Activated CD8-positive, alpha-beta memory T cell treated with anti-CD3 and anti-CD28 coated beads, Interleukin-2, amount 10 ng/mL, durations not matched to agents 7 days and 5 days (primary cell): ENCODE measurements at regions of chr18 and their contacts with region 1.

Region 1: DNA sequence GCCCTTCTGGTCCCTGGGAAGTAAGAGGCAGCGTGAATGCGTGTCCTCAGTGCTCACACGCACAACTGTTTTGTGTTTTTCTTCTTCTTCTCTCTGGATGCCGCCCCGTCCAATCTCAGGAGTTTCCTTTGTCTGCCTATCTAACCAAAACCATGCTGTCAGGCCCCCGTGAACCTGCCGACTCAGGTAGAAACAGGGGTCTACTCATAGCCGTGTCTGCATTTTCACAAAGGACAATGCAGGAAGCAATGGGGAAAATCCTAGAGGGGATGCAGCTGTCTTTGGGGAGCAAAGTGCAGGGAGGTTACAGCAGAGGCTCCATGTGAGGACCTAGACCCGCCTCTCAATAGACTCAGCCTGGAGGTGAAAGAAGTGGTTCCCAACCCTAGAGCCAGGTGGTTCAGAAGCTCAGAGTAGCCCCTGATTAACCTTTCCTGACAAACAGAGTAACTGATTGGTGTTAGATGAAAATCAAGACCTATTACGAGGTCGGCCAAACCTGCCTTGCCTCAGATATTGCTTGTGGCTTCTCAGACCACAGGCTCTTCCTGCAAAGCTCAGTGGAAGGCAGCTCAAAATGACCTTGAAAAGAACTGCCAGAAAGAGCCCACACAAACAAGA is 49.3 kb downstream of the CD226 start:
- DNase-seq: peak; percentile 79
- ATAC-seq: peak; percentile 35
- H3K4me3 Mint-ChIP-seq: peak overlapping the region; percentile 76
- H3K27ac Mint-ChIP-seq: peak overlapping the region; percentile 98
- H3K4me1 Mint-ChIP-seq: peaks cover 75% of the 10 kb centered on the region
- H3K27me3 Mint-ChIP-seq: no peaks in the 10 kb centered on the region

Region 2: DNA sequence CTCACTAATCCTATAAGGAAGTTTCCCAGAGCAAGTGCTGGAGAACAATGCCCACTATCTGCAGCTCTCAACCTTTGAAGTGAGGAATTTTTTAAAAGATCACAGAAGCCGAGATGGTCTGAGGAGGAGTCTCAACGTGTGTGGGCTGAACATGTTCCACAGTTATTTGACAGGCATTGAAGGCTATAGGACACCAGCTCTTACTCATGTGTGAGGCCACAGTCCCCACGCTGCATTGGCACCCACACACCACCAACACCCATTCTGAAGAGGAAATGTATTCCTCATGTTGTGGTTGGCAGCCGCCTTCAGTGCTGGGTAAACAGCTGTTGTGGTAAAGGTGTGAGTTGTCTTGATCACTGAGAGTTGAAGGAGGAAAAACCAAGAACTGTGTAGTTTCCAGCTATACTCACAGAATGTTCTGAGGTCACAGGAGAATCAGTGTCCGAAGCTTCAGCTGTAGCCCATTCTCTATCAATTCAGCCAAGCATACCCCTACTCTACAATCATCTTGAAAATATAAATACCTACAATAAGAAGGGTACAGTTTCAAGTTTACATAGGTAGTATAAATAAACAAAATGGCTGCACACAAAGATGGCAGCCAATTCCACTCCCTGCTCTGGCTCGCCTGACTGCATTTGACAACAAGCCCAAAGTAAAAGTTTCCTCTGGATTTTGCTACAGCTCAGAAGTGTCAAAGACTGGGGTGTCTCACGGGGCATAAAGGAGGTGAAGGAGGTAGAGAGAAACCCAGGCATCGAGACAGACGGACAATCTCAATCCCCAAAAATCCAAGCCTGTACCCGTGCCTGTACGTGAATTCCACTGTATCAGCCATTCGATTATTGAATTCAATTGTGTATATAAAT is 37.2 kb after region 1 on chr18:
- CTCF ChIA-PET with region 1: interaction called, 20 read pairs
- DNase-seq: peak; percentile 96
- ATAC-seq: peak; percentile 94
- H3K4me3 Mint-ChIP-seq: no peak overlapping the region
- H3K27ac Mint-ChIP-seq: no peak overlapping the region
- H3K4me1 Mint-ChIP-seq: peaks cover 39% of the 10 kb centered on the region
- H3K27me3 Mint-ChIP-seq: peaks cover 2% of the 10 kb centered on the region

Region 3: DNA sequence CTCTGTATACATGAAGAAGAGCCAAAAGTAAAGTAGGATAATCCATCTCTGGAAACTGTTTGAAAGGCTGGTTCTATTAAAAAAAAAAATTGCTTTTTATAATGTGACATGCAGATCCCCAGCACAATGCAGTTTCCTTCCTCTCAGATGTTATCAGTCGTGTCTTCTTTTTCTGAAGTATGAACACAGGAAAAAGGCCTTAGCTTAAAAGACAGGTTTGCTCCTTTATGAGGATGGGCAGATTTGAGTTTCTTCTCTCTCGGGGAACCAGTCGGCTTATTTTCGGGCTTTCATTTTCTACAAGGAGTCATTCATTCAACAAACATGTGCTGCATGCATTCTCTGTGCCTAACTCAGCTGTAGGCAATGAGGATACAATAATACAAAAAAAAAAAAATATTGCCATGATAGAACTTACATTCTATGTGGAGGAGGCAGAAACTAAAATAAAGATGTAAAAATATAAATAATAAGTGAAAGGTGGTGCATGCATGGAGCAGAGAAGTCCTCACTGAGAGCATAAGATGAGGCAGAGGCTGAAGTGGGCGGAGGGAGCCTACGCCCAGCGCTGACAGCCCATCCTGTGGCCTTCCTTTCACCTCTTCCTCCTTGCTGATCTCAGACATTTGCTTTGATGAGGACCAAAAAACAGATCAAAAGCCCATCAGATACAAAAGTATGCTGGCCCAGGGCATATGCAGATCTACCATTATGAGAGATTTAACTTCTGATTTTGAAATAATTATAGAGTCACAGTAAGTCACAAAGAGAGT is 49.2 kb after region 1 on chr18 and contains the start of gene CD226:
- CTCF ChIA-PET with region 1: interaction called, 22 read pairs
- DNase-seq: peak; percentile 74
- ATAC-seq: peak; percentile 54
- H3K4me3 Mint-ChIP-seq: no peak within 1 kb of the TSS
- H3K27ac Mint-ChIP-seq: no peak within 1 kb of the TSS
- H3K4me1 Mint-ChIP-seq: peaks cover 37% of the 10 kb centered on the region
- H3K27me3 Mint-ChIP-seq: no peaks in the 10 kb centered on the region
- total RNA-seq, gene CD226: 83.3 to 95.4 TPM

Region 4: GRCh38 chr18:70205421-70206397 is 307.4 kb after region 1 on chr18 and contains the start of gene RTTN:
- CTCF ChIA-PET with region 1: no interaction called
- DNase-seq: peak; percentile 95
- ATAC-seq: peak; percentile 95
- H3K4me3 Mint-ChIP-seq: peak within 1 kb of the TSS; percentile 100
- H3K27ac Mint-ChIP-seq: peak within 1 kb of the TSS; percentile 99
- H3K4me1 Mint-ChIP-seq: peaks cover 41% of the 10 kb centered on the region
- H3K27me3 Mint-ChIP-seq: peaks cover 8% of the 10 kb centered on the region
- total RNA-seq, gene RTTN: 30.3 to 42.3 TPM

Region 5: DNA sequence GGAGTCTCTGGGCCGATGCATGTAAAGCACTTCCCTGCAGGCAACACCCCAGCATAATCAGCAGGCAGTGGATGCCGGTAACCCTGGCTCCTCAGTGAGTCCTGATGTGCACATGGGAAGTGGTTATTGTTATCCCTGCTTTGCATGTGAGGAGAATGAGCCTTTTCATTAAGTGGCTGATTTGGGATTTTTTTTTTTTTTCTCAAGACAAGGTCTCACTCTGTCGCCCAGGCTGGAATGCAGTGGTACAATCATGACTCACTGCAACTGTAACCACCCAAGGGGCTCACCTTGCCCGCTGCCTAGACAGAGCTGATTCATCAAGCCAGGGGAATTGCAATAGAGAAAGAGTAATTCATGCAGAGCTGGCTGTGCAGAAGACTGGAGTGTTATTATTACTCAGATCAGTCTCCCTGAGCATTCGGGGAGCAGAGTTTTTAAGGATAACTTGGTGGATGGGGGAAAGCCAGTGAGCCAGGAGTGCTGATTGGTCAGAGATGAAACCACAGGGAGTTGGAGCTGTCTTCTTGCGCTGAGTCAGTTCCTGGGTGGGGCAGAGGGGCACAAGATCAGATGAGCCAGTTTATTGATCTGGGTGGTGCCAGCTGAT is 485.9 kb after region 1 on chr18:
- CTCF ChIA-PET with region 1: no interaction called
- DNase-seq: no peak
- ATAC-seq: no peak
- H3K4me3 Mint-ChIP-seq: no peak overlapping the region
- H3K27ac Mint-ChIP-seq: no peak overlapping the region
- H3K4me1 Mint-ChIP-seq: peaks cover 5% of the 10 kb centered on the region
- H3K27me3 Mint-ChIP-seq: no peaks in the 10 kb centered on the region